ENCODE measurements at regions of chr6 and their contacts with region 1.

Region 1: GRCh38 chr6:105484238-105485161 is 81.6 kb upstream of the PREP start:
- DNase-seq: no peak
- H3K4me3 ChIP-seq: peak overlapping the region in 1 of 8 donors; percentile 16
- H3K27ac ChIP-seq: peak overlapping the region in 4 of 8 donors; percentile 4 to 77 (median 64)
- H3K4me1 ChIP-seq: peaks cover 4 to 50% (median 18%) of the 10 kb centered on the region in 6 donors
- H3K27me3 ChIP-seq: no peaks in the 10 kb centered on the region
- CTCF ChIP-seq: peak in 10 of 11 experiments; percentile 28 to 72 (median 64)
- POLR2A ChIP-seq: no peak

Region 2: GRCh38 chr6:106290954-106291353 is 806.5 kb after region 1 on chr6:
- intact Hi-C with region 1: loop called (anchors 10 kb)
- DNase-seq: no peak
- H3K4me3 ChIP-seq: no peak overlapping the region
- H3K27ac ChIP-seq: no peak overlapping the region
- H3K4me1 ChIP-seq: peaks cover 0 to under 1% (median 0%) of the 10 kb centered on the region in 6 donors
- H3K27me3 ChIP-seq: no peaks in the 10 kb centered on the region
- CTCF ChIP-seq: no peak
- POLR2A ChIP-seq: no peak

Measured in spleen (tissue), 13 donors.